Activated CD4-positive, alpha-beta memory T cell treated with anti-CD3 and anti-CD28 coated beads for 36 hours (primary cell): ENCODE measurements at regions of chr17 and their contacts with region 1.

Region 1: GRCh38 chr17:58317421-58318064 is 11.1 kb downstream of the TSPOAP1 start:
- DNase-seq: peak; percentile 89
- H3K4me3 Mint-ChIP-seq: no peak overlapping the region
- H3K27ac Mint-ChIP-seq: peak overlapping the region; percentile 85
- H3K4me1 Mint-ChIP-seq: peaks cover 18% of the 10 kb centered on the region
- H3K27me3 Mint-ChIP-seq: no peaks in the 10 kb centered on the region

Region 2: DNA sequence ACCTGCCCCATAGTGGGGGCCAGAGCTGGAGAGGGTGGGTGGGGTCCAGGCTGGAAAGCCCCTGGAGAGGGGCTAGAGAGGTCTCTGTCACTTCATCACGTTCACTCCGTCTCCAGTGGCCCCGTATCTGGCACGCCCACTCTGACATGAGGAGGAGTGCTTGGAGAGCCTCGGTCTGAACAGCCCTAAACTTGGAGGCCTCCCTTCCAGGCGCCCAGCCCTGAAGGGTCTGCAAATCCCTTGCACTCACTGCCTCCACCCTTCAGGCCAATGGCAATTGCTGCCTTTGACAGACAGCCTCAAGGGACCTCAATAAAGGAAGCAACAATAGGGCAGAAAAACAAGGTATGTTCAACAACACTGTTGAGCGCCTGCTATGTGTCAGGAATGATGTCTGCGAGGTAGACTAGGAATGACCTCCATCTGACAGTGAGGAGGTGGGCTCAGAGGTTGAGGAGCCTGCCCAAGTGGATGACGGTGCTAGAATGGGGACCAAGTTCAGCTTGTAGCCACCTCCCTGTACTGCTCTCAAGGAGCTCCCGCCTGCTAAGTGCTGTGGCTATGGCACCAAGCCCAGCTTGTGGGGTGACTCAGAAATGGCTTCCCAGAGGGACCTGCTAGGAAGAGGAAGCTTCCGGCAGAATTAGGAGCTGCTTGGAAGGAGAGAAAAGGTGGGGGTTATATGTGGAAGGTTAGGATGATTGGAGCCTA is 128.0 kb before region 1 on chr17:
- CTCF ChIA-PET with region 1: no interaction called
- POLR2A ChIA-PET with region 1: no interaction called
- intact Hi-C with region 1: no loop called
- DNase-seq: no peak
- H3K4me3 Mint-ChIP-seq: no peak overlapping the region
- H3K27ac Mint-ChIP-seq: no peak overlapping the region
- H3K4me1 Mint-ChIP-seq: peaks cover 3% of the 10 kb centered on the region
- H3K27me3 Mint-ChIP-seq: peaks cover 15% of the 10 kb centered on the region

Region 3: GRCh38 chr17:58303971-58304725 is 13.4 kb before region 1 on chr17:
- CTCF ChIA-PET with region 1: interaction called, 76 read pairs
- POLR2A ChIA-PET with region 1: interaction called, 4 read pairs
- intact Hi-C with region 1: no loop called
- DNase-seq: peak; percentile 72
- H3K4me3 Mint-ChIP-seq: no peak overlapping the region
- H3K27ac Mint-ChIP-seq: no peak overlapping the region
- H3K4me1 Mint-ChIP-seq: peaks cover 5% of the 10 kb centered on the region
- H3K27me3 Mint-ChIP-seq: no peaks in the 10 kb centered on the region

Region 4: GRCh38 chr17:58337600-58338453 is 20.3 kb after region 1 on chr17:
- CTCF ChIA-PET with region 1: interaction called, 113 read pairs
- POLR2A ChIA-PET with region 1: interaction called, 1,114 read pairs
- intact Hi-C with region 1: no loop called
- DNase-seq: peak; percentile 98
- H3K4me3 Mint-ChIP-seq: peak overlapping the region; percentile 92
- H3K27ac Mint-ChIP-seq: peak overlapping the region; percentile 98
- H3K4me1 Mint-ChIP-seq: peaks cover 22% of the 10 kb centered on the region
- H3K27me3 Mint-ChIP-seq: no peaks in the 10 kb centered on the region

Region 5: GRCh38 chr17:58352014-58352842 is 34.7 kb after region 1 on chr17 and contains the start of gene SUPT4H1:
- CTCF ChIA-PET with region 1: interaction called, 90 read pairs
- POLR2A ChIA-PET with region 1: interaction called, 1,114 read pairs
- intact Hi-C with region 1: loop called (anchors 1 kb)
- DNase-seq: peak; percentile 96
- H3K4me3 Mint-ChIP-seq: peak within 1 kb of the TSS; percentile 100
- H3K27ac Mint-ChIP-seq: peak within 1 kb of the TSS; percentile 99
- H3K4me1 Mint-ChIP-seq: peaks cover 50% of the 10 kb centered on the region
- H3K27me3 Mint-ChIP-seq: no peaks in the 10 kb centered on the region
- total RNA-seq, gene SUPT4H1: 113 to 114 TPM

Region 6: DNA sequence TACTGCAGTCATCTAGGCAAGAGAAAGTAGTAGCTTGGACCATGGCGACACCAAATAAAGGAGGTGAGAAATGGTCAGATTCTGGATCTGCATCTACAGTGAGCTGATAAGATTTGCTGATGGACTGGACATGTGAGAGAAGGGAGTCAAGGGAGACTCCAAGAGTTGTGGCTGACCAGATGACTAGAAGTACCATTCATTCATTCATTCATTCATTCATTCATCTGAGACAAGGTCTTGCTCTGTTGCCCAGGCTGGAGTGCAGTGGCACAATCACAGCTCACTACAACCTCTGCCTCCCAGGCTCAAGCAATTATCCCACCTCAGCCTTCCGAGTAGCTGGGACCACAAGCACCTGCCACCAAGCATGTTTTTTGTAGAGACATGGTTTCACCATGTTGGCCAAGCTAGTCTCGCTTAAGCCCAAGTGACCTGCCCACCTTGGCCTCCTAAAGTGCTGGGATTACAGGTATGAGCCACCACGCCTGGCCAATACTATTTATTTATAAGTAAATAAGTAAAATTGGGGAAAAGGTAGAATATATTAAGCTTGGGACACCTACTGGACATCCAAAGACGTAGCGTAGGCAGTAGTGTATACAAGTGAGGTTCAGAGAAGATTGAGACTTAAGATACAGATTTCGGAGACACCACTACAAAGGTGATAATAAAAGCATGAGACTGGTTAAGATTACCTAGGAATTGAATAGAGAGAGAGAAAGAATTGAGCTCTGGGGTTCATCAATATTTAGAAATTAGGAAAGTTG is 115.4 kb after region 1 on chr17:
- CTCF ChIA-PET with region 1: interaction called, 15 read pairs
- POLR2A ChIA-PET with region 1: no interaction called
- intact Hi-C with region 1: no loop called
- DNase-seq: no peak
- H3K4me3 Mint-ChIP-seq: no peak overlapping the region
- H3K27ac Mint-ChIP-seq: no peak overlapping the region
- H3K4me1 Mint-ChIP-seq: no peaks in the 10 kb centered on the region
- H3K27me3 Mint-ChIP-seq: no peaks in the 10 kb centered on the region

Region 7: GRCh38 chr17:58487589-58488427 is 170.3 kb after region 1 on chr17 and contains the start of gene HSF5:
- CTCF ChIA-PET with region 1: interaction called, 26 read pairs
- POLR2A ChIA-PET with region 1: interaction called, 9 read pairs
- intact Hi-C with region 1: loop called (anchors 5 kb)
- DNase-seq: peak; percentile 81
- H3K4me3 Mint-ChIP-seq: peak within 1 kb of the TSS; percentile 50
- H3K27ac Mint-ChIP-seq: peak within 1 kb of the TSS; percentile 28
- H3K4me1 Mint-ChIP-seq: peaks cover 15% of the 10 kb centered on the region
- H3K27me3 Mint-ChIP-seq: no peaks in the 10 kb centered on the region
- total RNA-seq, gene HSF5: 2.9 to 3.0 TPM